ENCODE measurements at regions of chr2 and their contacts with region 1.

Region 1: DNA sequence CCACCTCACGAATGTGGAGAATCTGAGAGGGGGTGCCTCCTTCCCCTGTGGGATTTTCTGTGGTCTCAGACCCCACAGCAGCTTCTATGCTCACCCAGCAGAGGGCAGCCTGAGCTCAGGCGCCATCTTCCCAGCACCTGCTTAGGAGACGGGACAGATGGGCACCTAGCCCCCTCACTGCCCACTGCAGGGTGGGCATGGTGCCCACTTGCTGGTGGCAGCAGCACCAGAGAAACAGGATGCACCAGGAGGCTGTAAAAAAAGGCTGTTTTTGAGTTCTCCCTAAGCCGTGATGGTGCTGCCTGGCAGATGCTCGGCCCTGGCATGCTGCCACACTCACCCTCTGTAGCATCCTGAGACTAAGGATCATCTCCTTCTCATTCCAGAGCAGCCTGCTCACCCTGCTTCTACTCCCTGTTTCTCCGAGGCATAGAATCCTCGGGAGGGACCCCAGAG is 19.1 kb upstream of the SLC20A1 start:
- DNase-seq: peak; percentile 34
- H3K4me3 ChIP-seq: no peak overlapping the region
- H3K27ac ChIP-seq: no peak overlapping the region
- H3K4me1 ChIP-seq: no peaks in the 10 kb centered on the region
- H3K27me3 ChIP-seq: no peaks in the 10 kb centered on the region
- CTCF ChIP-seq: peak; percentile 61 to 92 (median 86)
- POLR2A ChIP-seq: no peak

Region 2: DNA sequence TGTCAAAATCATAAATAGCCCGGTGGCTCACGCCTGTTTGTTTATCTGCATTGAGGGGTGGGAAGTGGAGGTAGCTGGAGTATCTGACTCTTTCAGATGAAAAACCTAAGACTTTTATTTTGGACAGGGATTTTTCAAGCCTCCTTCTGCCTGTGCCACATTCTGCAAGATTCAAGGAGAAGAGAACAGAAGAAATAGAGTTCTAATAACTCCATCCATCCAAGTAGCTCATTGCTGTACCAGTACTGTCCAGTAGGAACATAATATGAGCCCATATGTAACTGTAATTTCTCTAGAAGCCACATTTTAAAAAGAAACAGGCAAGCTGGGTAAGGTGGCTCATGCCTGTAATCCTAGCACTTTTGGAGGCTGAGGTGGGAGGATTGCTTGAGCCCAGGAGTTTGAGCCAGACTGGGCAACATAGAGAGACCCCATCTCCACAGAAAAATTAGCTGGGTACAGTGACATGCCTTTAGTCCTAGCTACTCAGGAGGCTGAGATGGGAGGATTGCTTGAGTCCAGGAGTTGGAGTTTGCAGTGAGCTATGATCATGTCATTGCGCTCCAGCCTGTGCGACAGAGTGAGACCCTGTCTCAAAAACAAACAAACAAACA is 58.7 kb after region 1 on chr2:
- intact Hi-C with region 1: loop called (anchors 5 kb)
- DNase-seq: no peak
- H3K4me3 ChIP-seq: no peak overlapping the region
- H3K27ac ChIP-seq: no peak overlapping the region
- H3K4me1 ChIP-seq: no peaks in the 10 kb centered on the region
- H3K27me3 ChIP-seq: no peaks in the 10 kb centered on the region
- CTCF ChIP-seq: no peak
- POLR2A ChIP-seq: no peak

Region 3: GRCh38 chr2:112726497-112727190 is 100.0 kb after region 1 on chr2:
- intact Hi-C with region 1: loop called (anchors 1 kb)
- DNase-seq: peak; percentile 89
- H3K4me3 ChIP-seq: no peak overlapping the region
- H3K27ac ChIP-seq: no peak overlapping the region
- H3K4me1 ChIP-seq: no peaks in the 10 kb centered on the region
- H3K27me3 ChIP-seq: no peaks in the 10 kb centered on the region
- CTCF ChIP-seq: peak; percentile 93 to 99 (median 95)
- POLR2A ChIP-seq: no peak

Region 4: GRCh38 chr2:112958428-112959108 is 331.9 kb after region 1 on chr2:
- intact Hi-C with region 1: loop called (anchors 10 kb)
- DNase-seq: peak; percentile 16
- H3K4me3 ChIP-seq: no peak overlapping the region
- H3K27ac ChIP-seq: no peak overlapping the region
- H3K4me1 ChIP-seq: no peaks in the 10 kb centered on the region
- H3K27me3 ChIP-seq: no peaks in the 10 kb centered on the region
- CTCF ChIP-seq: peak; percentile 30 to 68 (median 46)
- POLR2A ChIP-seq: no peak